ENCODE measurements at regions of chr3 and their contacts with region 1.

Region 1: DNA sequence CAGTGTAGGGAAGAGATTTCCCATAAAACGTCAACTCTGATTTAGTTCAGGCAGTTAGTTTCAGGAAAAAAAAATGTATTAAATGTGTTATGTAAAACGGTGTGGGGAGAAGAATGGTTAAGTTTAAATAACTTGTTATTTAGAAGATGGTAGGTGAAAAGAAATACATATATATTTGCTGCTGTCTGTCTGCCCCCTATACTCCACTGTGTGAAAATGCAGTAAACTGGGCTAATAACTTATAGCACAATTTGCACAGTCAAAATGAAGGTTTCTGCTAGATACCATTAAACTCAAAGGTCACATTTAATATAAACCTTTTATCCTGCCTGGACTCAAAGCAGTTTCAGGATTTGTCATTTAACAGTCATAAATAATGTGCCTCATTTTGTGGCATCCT is 515.0 kb downstream of the FGF12 start:
- DNase-seq: no peak
- CTCF ChIP-seq: peak; percentile 31

Region 2: GRCh38 chr3:192188218-192188835 is 24.0 kb before region 1 on chr3:
- CTCF ChIA-PET with region 1: interaction called, 13 read pairs
- POLR2A ChIA-PET with region 1: no interaction called
- DNase-seq: peak; percentile 52
- CTCF ChIP-seq: peak; percentile 70

Region 3: GRCh38 chr3:192194085-192194484 is 18.2 kb before region 1 on chr3:
- CTCF ChIA-PET with region 1: interaction called, 13 read pairs
- POLR2A ChIA-PET with region 1: no interaction called
- DNase-seq: no peak
- CTCF ChIP-seq: no peak